Activated naive CD4-positive, alpha-beta T cell treated with anti-CD3 and anti-CD28 coated beads, Interleukin-2, amount 10 ng/mL, durations not matched to agents 7 days and 5 days (primary cell): ENCODE measurements at regions of chr12 and their contacts with region 1.

Region 1: DNA sequence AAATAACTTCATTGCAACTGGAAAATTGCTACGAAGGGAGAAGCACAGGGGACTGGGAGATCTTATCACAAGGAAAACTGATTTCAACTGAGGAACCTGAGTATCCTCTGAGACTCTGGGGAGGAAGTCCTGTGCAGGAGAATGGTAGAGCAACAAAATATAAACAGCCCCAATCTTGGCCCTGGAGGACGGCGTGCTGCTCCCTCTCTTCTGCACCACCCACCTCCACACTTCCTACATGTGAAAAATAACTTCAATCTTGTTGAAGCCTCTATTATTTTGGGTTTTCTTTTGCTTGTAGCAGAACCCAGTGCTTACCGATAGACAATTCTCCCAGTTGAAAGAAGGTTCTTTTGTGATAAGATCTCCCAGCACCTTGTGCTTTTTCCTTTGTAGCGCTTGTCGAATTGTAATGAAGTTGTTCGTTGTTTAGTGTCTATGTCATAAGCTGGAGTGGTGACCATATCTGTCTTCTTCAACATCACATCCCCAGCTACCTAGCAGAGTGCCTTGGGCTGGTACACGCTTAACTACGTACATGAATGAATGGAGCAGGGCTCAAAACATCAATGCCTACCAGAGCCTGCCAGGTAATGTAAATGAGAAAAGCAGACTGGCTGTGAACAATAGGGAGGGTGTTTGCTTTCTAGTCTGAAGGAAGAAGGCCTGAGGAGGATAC is 2.8 kb upstream of the CD4 start:
- DNase-seq: peak; percentile 41
- H3K4me3 Mint-ChIP-seq: peak overlapping the region; percentile 4
- H3K27ac Mint-ChIP-seq: peak overlapping the region; percentile 83
- H3K4me1 Mint-ChIP-seq: peaks cover 69% of the 10 kb centered on the region
- H3K27me3 Mint-ChIP-seq: no peaks in the 10 kb centered on the region

Region 2: GRCh38 chr12:6723607-6724396 is 62.8 kb before region 1 on chr12 and contains the start of gene COPS7A:
- CTCF ChIA-PET with region 1: no interaction called
- DNase-seq: peak; percentile 99
- H3K4me3 Mint-ChIP-seq: peak within 1 kb of the TSS; percentile 88
- H3K27ac Mint-ChIP-seq: peak within 1 kb of the TSS; percentile 91
- H3K4me1 Mint-ChIP-seq: peaks cover 31% of the 10 kb centered on the region
- H3K27me3 Mint-ChIP-seq: peaks cover 8% of the 10 kb centered on the region

Region 3: DNA sequence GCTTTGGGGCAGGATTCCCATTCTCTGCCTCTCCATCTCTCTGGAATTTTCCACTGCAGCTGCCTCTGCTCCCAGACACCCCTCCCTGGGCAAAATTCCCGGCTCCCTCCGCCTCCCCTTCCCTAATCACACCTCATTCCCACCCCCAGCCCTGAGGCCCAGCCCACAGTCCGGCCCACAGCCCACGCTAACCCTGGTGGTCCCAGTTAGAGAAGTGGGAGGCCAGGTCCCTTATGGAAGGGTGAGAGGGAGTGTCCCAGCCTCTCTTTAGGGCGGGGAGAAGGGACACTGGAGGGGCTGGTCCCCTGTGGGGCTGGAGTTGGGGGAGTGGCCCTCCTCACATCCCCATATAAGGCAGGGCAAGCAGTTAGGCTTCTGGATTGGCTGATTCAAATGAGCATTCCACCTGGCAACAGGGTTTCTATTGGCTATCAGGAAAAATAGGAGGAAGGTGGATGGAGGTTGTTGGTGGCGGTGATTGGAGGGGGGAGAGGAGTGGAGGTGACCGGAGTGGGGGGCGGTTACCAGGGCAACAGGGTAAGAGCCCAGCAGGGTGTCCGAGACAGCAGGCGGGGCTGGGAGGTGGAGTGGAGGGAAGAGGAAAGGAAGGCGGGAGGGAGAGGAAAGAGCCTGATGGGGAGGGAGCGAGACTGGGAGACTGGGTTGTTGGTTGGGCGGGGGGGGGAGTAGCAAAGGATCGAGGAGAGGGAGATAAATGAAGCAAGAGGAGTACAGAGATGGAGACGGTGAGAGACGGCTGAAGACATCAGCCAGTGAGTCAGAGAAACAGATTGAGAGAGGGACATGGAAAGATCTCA is 22.3 kb before region 1 on chr12:
- CTCF ChIA-PET with region 1: interaction called, 63 read pairs
- DNase-seq: peak; percentile 64
- H3K4me3 Mint-ChIP-seq: peak overlapping the region; percentile 19
- H3K27ac Mint-ChIP-seq: no peak overlapping the region
- H3K4me1 Mint-ChIP-seq: peaks cover 39% of the 10 kb centered on the region
- H3K27me3 Mint-ChIP-seq: peaks cover 88% of the 10 kb centered on the region

Region 4: GRCh38 chr12:6799147-6799546 is 12.6 kb after region 1 on chr12:
- CTCF ChIA-PET with region 1: no interaction called
- DNase-seq: no peak
- H3K4me3 Mint-ChIP-seq: no peak overlapping the region
- H3K27ac Mint-ChIP-seq: no peak overlapping the region
- H3K4me1 Mint-ChIP-seq: peaks cover 36% of the 10 kb centered on the region
- H3K27me3 Mint-ChIP-seq: no peaks in the 10 kb centered on the region